Calu3 (cell line): ENCODE measurements at regions of chr17 and their contacts with region 1.

Region 1: DNA sequence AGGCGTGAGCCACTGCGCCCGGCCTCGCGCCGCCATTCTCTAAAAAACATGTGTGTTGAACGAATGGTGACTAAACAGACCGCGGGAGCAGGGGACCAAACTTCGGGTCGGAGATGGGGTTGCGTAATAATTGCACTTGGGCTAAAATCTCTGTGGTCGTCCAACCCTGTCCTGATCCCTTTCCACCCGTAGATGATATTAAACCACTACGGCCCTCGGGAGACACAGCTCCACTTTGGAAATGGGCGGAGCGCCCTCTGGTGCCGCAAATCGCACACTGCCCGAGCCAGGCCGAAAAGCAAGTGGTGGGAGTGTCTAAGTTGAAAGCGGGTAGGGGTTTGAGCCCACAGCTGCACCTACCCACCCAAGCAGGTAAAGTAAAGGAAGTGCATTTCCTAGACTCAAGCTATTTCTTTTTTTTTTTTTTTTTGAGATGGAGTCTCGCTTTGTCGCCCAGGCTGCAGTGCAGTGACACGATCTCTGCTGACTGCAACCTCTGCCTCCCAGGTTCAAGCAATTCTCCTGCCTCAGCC is 17.0 kb downstream of the CAVIN1 start:
- DNase-seq: peak; percentile 95
- H3K4me3 Mint-ChIP-seq: no peak overlapping the region
- H3K27ac Mint-ChIP-seq: no peak overlapping the region
- H3K4me1 Mint-ChIP-seq: peaks cover 49% of the 10 kb centered on the region
- H3K27me3 Mint-ChIP-seq: no peaks in the 10 kb centered on the region
- CTCF ChIP-seq: peak; percentile 93

Region 2: GRCh38 chr17:42112552-42113176 is 293.4 kb before region 1 on chr17 and contains the start of gene DHX58:
- CTCF ChIA-PET with region 1: no interaction called
- intact Hi-C with region 1: loop called (anchors 10 kb)
- DNase-seq: peak; percentile 83
- H3K4me3 Mint-ChIP-seq: peak within 1 kb of the TSS; percentile 80
- H3K27ac Mint-ChIP-seq: peak within 1 kb of the TSS; percentile 88
- H3K4me1 Mint-ChIP-seq: peaks cover 7% of the 10 kb centered on the region
- H3K27me3 Mint-ChIP-seq: no peaks in the 10 kb centered on the region
- CTCF ChIP-seq: no peak
- total RNA-seq, gene DHX58: 45.6 and 77.5 TPM in 2 replicates

Region 3: DNA sequence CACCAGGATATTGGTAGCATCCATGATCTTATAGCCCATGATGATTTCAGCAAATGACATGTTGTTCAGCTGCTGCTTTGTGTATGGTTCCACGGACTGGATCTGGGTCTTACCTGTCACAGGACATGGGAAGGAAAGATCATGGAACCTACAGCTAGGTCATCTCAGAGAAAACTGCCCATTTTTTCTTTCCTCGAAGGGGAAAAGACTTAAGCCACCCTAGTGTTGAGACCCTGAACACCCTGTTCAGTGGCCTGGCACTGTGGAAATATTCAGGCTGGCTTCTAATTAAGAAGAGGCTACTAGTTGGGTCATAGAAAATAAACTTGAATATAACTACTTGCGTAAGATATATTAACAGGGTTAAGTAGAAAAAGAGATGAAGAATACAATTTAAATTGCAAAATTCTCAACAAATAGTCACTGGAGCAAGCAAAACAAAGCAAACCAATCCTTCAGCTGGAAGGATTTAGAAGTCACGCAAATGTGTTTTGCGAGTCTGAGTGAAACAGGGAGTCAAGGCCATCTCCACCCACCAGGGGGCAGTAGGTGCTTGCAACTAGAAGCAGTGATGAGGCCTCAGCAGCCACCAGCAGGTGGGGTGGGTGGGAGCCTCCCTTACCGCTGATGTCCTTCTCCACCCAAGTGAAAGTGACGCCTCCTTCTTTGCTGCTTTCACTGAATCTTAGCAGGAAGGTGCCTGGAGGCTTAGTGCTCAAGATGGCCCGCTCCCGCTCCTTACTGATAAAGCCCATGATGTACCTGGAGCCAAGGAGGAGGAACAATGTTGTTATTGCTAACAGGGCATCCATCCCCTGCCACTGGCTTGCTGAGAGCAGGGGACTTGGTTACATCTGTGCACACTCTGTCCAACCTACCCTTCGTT is 83.4 kb before region 1 on chr17:
- CTCF ChIA-PET with region 1: interaction called, 11 read pairs
- intact Hi-C with region 1: loop called (anchors 1 kb)
- DNase-seq: peak; percentile 98
- H3K4me3 Mint-ChIP-seq: no peak overlapping the region
- H3K27ac Mint-ChIP-seq: no peak overlapping the region
- H3K4me1 Mint-ChIP-seq: peaks cover 12% of the 10 kb centered on the region
- H3K27me3 Mint-ChIP-seq: no peaks in the 10 kb centered on the region
- CTCF ChIP-seq: peak; percentile 100

Region 4: GRCh38 chr17:42378597-42379594 is 27.1 kb before region 1 on chr17:
- CTCF ChIA-PET with region 1: interaction called, 12 read pairs
- intact Hi-C with region 1: no loop called
- DNase-seq: no peak
- H3K4me3 Mint-ChIP-seq: peak overlapping the region; percentile 70
- H3K27ac Mint-ChIP-seq: peak overlapping the region; percentile 78
- H3K4me1 Mint-ChIP-seq: peaks cover 26% of the 10 kb centered on the region
- H3K27me3 Mint-ChIP-seq: no peaks in the 10 kb centered on the region
- CTCF ChIP-seq: no peak

Region 5: DNA sequence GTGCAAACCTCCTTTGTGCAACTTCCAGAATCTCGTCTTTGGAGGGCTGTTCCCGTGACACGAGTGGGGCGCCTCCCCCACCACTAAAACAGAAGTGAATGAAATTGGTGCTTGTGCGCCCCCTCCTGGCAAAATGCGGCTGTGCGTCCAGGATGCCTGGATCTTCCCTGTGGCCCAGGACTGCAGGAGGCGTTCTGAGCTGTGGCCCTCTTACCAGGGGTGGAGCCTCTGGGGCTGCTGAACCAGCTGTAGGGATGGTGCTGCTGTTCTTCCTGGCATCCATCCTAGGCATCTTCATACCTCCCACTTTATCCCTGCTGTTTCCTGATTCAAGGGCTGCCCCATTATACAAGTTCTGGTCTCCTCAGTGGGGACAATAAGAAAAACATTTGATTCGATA is 111.5 kb after region 1 on chr17:
- CTCF ChIA-PET with region 1: interaction called, 15 read pairs
- intact Hi-C with region 1: no loop called
- DNase-seq: peak; percentile 91
- H3K4me3 Mint-ChIP-seq: no peak overlapping the region
- H3K27ac Mint-ChIP-seq: peak overlapping the region; percentile 95
- H3K4me1 Mint-ChIP-seq: peaks cover 51% of the 10 kb centered on the region
- H3K27me3 Mint-ChIP-seq: no peaks in the 10 kb centered on the region
- CTCF ChIP-seq: peak; percentile 99